ENCODE measurements at regions of chr5 and their contacts with region 1.

Region 1: GRCh38 chr5:6732634-6733410 is 19.6 kb downstream of the TENT4A start:
- DNase-seq: no peak
- H3K4me3 ChIP-seq: no peak overlapping the region
- H3K27me3 ChIP-seq: no peaks in the 10 kb centered on the region
- CTCF ChIP-seq: no peak

Region 2: DNA sequence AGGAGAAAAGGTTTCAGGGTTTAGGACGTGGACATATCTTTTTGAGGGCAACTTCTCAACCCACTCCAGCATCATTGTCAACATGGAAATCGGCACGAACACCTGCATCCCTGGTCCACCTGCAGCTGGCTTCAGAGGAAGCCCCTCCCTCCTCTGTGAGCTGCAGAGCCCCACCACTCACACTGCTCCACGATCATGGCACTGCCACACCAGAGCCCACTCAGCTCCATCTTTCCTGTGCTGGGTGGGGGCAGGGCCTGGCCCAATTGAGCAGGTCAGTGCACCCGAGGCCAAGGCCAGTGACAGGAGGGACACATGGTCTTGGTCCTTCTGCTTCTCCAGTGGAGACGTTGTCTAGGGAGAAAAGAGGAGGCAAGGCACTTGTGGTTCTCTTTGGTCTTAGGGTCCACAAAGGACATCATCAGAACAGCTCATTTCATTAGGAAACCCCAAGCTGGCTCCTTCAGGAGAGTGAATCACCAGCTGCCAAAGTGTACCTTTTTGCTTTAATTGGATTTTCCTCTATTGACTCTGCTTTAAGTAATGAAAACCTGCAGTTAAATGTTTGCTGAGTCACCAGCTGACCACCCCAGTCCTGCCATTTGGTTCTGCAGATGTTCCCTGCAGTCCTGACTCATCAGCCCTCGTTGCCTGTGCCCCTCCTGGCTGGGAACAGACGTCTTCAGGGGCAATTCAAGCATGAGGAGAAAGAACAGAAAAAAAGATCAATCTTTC is 228.0 kb before region 1 on chr5:
- CTCF ChIA-PET with region 1: no interaction called
- POLR2A ChIA-PET with region 1: no interaction called
- DNase-seq: peak; percentile 12
- H3K4me3 ChIP-seq: no peak overlapping the region
- H3K27me3 ChIP-seq: no peaks in the 10 kb centered on the region
- CTCF ChIP-seq: no peak

Region 3: GRCh38 chr5:6745706-6746222 is 12.9 kb after region 1 on chr5:
- CTCF ChIA-PET with region 1: interaction called, 16 read pairs
- POLR2A ChIA-PET with region 1: no interaction called
- DNase-seq: no peak
- H3K4me3 ChIP-seq: no peak overlapping the region
- H3K27me3 ChIP-seq: no peaks in the 10 kb centered on the region
- CTCF ChIP-seq: peak; percentile 76

Measured in BJ (cell line).